MCF 10A (cell line): ENCODE measurements at regions of chr7 and their contacts with region 1.

Region 1: GRCh38 chr7:123643495-123644441 is 11.9 kb upstream of the LMOD2 start:
- DNase-seq: peak; percentile 74
- H3K4me3 Mint-ChIP-seq: peak overlapping the region; percentile 60
- H3K27ac Mint-ChIP-seq: peak overlapping the region; percentile 89
- H3K4me1 Mint-ChIP-seq: peaks cover 17% of the 10 kb centered on the region
- H3K27me3 Mint-ChIP-seq: no peaks in the 10 kb centered on the region
- CTCF ChIP-seq: no peak

Region 2: DNA sequence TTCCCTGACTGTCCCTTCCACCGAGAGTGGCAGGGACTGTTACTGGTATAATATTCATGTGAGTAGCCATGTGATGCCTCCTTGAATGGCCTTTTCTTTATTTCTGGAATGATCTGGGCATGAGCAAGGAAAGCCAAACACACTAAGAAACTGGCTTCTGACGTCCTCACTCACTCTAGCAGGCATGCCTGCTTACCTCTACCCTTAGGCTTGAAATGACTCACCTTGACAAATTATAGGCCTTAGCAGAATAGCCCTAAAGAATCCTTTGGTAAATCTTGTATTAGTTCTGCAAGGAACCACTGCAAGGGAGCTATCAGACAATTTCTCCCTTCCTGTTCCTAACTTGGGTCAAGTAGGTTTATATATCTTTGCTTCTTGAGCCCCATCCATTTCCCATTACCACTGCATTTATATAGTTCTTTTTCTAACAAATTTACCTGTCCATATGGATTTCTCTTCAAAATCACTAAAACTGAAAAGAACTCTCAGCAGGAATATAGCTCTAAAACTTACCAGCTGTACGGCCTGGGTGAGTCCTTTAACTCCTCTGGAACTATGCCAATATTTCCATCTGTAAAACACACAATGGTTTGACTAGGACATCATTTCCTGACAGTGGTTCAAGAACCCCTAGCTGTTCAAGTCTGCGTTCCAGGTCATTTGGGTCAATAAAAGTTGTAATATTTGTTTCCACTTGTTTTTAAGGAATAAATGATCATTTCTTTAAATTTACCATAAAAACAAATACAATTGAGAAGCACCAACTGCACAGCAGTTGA is 73.2 kb before region 1 on chr7:
- CTCF ChIA-PET with region 1: no interaction called
- POLR2A ChIA-PET with region 1: no interaction called
- intact Hi-C with region 1: no loop called
- DNase-seq: peak; percentile 51
- H3K4me3 Mint-ChIP-seq: no peak overlapping the region
- H3K27ac Mint-ChIP-seq: no peak overlapping the region
- H3K4me1 Mint-ChIP-seq: no peaks in the 10 kb centered on the region
- H3K27me3 Mint-ChIP-seq: no peaks in the 10 kb centered on the region
- CTCF ChIP-seq: no peak

Region 3: GRCh38 chr7:123674399-123675180 is 30.8 kb after region 1 on chr7:
- CTCF ChIA-PET with region 1: interaction called, 3 read pairs
- POLR2A ChIA-PET with region 1: interaction called, 11 read pairs
- intact Hi-C with region 1: no loop called
- DNase-seq: peak; percentile 70
- H3K4me3 Mint-ChIP-seq: no peak overlapping the region
- H3K27ac Mint-ChIP-seq: peak overlapping the region; percentile 46
- H3K4me1 Mint-ChIP-seq: peaks cover 21% of the 10 kb centered on the region
- H3K27me3 Mint-ChIP-seq: no peaks in the 10 kb centered on the region
- CTCF ChIP-seq: no peak